ENCODE measurements at regions of chr5 and their contacts with region 1.

Region 1: GRCh38 chr5:154179846-154180710 is 10.5 kb upstream of the GALNT10 start:
- DNase-seq: no peak
- H3K4me3 Mint-ChIP-seq: no peak overlapping the region
- H3K27ac Mint-ChIP-seq: no peak overlapping the region
- H3K4me1 Mint-ChIP-seq: peaks cover 16% of the 10 kb centered on the region
- H3K27me3 Mint-ChIP-seq: peaks cover 19% of the 10 kb centered on the region

Region 2: GRCh38 chr5:153974131-153974812 is 205.8 kb before region 1 on chr5:
- intact Hi-C with region 1: loop called (anchors 1 kb)
- DNase-seq: peak; percentile 11
- H3K4me3 Mint-ChIP-seq: no peak overlapping the region
- H3K27ac Mint-ChIP-seq: no peak overlapping the region
- H3K4me1 Mint-ChIP-seq: peaks cover 3% of the 10 kb centered on the region
- H3K27me3 Mint-ChIP-seq: peaks cover 9% of the 10 kb centered on the region

Measured in activated T-helper 2 cell treated with anti-CD3 and anti-CD28 coated beads, Interferon-gamma antibody, Interleukin-2, Interleukin-4, amounts not matched to agents 10 μg/mL and 5 μg/mL and 100 μg/mL, durations not matched to agents 14 hours and 24 hours and 36 hours (primary cell).